ENCODE measurements at regions of chrX and their contacts with region 1.

Region 1: GRCh38 chrX:132999150-132999549 is 40.7 kb upstream of the HS6ST2 start:
- DNase-seq: no peak
- H3K4me3 ChIP-seq: no peak overlapping the region
- H3K27ac ChIP-seq: no peak overlapping the region
- H3K4me1 ChIP-seq: no peaks in the 10 kb centered on the region
- H3K27me3 ChIP-seq: no peaks in the 10 kb centered on the region

Region 2: GRCh38 chrX:133698298-133698697 is 699.1 kb after region 1 on chrX:
- in situ Hi-C with region 1: loop called (anchors 25 kb)
- DNase-seq: peak; percentile 33
- H3K4me3 ChIP-seq: no peak overlapping the region
- H3K27ac ChIP-seq: no peak overlapping the region
- H3K4me1 ChIP-seq: no peaks in the 10 kb centered on the region
- H3K27me3 ChIP-seq: no peaks in the 10 kb centered on the region

Measured in GM23248 (cell line).